GM10248 (cell line): ENCODE measurements at regions of chr2 and their contacts with region 1.

Region 1: GRCh38 chr2:134973241-134974138 is 54.9 kb downstream of the CCNT2 start:
- DNase-seq: peak; percentile 20
- CTCF ChIP-seq: no peak

Region 2: GRCh38 chr2:134988994-134989605 is 15.6 kb after region 1 on chr2:
- CTCF ChIA-PET with region 1: interaction called, 10 read pairs
- POLR2A ChIA-PET with region 1: no interaction called
- DNase-seq: peak; percentile 34
- CTCF ChIP-seq: peak; percentile 49

Region 3: DNA sequence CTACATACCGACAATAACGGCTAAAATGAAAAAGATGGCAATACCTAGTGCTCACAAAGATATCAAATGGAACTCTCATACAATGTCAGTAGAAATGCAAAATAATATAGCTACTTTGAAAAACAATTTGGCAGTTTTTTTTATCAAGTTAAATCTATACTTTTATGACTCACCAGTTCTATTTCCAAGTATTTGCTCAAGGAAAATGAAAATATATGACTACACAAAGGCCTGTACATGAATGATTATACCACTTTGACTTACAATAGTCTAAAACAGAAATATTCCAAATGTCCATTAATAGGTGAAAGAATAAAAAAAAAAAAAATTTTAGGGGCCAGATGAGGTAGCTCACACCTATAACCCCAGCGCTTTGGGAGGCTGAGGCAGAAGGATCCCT is 337.8 kb after region 1 on chr2:
- CTCF ChIA-PET with region 1: no interaction called
- POLR2A ChIA-PET with region 1: no interaction called
- DNase-seq: no peak
- CTCF ChIP-seq: no peak